ENCODE measurements at regions of chr14 and their contacts with region 1.

Region 1: GRCh38 chr14:98182393-98183055 is 1089.5 kb downstream of the BCL11B start:
- DNase-seq: no peak
- H3K4me3 Mint-ChIP-seq: peak overlapping the region; percentile 12
- H3K27ac Mint-ChIP-seq: peak overlapping the region; percentile 83
- H3K4me1 Mint-ChIP-seq: peaks cover 85% of the 10 kb centered on the region
- H3K27me3 Mint-ChIP-seq: no peaks in the 10 kb centered on the region

Region 2: DNA sequence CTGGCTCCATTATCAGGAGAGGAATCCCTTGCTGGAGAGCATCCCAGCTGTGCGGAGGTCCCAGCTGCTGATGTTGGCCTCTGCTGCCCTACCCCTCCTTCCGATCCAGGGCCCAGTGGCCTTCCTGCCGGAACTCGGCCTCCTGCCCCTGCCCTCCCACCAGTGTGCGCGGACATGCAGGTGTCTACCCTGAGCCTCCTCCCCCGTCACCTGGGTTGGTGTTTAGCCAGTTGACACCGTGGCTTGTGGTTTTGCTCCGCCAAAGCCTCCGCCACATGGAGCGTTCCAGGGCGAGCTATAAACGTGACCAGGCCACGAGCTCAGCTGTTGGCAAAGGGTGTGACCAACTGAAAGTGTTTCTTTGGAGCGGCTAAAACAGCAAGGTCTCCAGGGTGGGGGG is 14.8 kb before region 1 on chr14:
- CTCF ChIA-PET with region 1: interaction called, 21 read pairs
- POLR2A ChIA-PET with region 1: interaction called, 244 read pairs
- DNase-seq: peak; percentile 55
- H3K4me3 Mint-ChIP-seq: no peak overlapping the region
- H3K27ac Mint-ChIP-seq: no peak overlapping the region
- H3K4me1 Mint-ChIP-seq: peaks cover 49% of the 10 kb centered on the region
- H3K27me3 Mint-ChIP-seq: peaks cover 2% of the 10 kb centered on the region

Measured in activated CD4-positive, alpha-beta memory T cell treated with anti-CD3 and anti-CD28 coated beads, Interleukin-2, amount 10 ng/mL, durations not matched to agents 7 days and 5 days (primary cell).